ENCODE measurements at regions of chr9 and their contacts with region 1.

Region 1: DNA sequence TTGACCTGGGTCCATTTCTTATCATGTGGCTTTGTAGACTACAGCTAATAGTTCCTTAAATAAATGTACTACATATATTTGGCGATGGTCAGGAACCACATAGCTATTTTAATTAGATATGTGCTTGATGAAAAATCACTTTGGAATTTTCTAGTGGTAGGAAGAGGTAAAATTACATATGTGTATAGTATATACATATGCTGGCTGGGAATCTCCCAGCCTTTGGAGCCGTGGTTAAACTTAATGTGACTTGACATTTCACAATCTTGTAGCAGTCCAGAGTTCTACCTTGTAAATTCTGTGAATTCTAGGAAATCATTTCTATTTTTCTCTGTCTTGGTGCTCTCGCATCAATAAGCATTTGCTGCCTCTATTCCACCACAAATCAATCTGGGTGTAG is 565.0 kb downstream of the DMRTA1 start:
- DNase-seq: no peak
- ATAC-seq: no peak
- H3K4me3 ChIP-seq: no peak overlapping the region
- H3K27ac ChIP-seq: no peak overlapping the region
- H3K4me1 ChIP-seq: no peaks in the 10 kb centered on the region
- H3K27me3 ChIP-seq: no peaks in the 10 kb centered on the region

Region 2: GRCh38 chr9:22539865-22540264 is 471.8 kb before region 1 on chr9:
- intact Hi-C with region 1: no loop called
- DNase-seq: no peak
- ATAC-seq: no peak
- H3K4me3 ChIP-seq: no peak overlapping the region
- H3K27ac ChIP-seq: no peak overlapping the region
- H3K4me1 ChIP-seq: no peaks in the 10 kb centered on the region
- H3K27me3 ChIP-seq: no peaks in the 10 kb centered on the region

Region 3: DNA sequence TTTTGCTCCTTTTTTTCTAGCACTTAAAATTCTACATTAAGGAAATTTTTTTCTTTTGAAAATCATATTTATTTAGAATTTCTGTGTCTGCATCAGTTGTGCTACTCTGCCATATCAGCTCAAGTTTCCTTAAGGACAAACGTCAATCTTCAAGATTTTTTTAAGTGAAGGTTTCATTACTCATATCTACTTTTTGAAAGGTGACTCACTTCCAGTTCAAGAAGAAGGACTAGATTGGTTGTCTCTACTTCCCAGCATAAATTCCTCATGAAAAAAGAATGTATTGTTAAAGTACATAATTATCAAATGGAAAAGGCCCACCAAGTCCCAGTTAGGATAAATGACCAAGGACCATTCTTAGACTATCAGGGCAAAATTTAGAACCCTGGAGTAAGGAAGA is 61.5 kb after region 1 on chr9:
- intact Hi-C with region 1: loop called in 1 of 4 experiments (anchors 10 kb)
- DNase-seq: no peak
- ATAC-seq: no peak
- H3K4me3 ChIP-seq: no peak overlapping the region
- H3K27ac ChIP-seq: no peak overlapping the region
- H3K4me1 ChIP-seq: no peaks in the 10 kb centered on the region
- H3K27me3 ChIP-seq: no peaks in the 10 kb centered on the region